ENCODE measurements at regions of chr19 and their contacts with region 1.

Region 1: DNA sequence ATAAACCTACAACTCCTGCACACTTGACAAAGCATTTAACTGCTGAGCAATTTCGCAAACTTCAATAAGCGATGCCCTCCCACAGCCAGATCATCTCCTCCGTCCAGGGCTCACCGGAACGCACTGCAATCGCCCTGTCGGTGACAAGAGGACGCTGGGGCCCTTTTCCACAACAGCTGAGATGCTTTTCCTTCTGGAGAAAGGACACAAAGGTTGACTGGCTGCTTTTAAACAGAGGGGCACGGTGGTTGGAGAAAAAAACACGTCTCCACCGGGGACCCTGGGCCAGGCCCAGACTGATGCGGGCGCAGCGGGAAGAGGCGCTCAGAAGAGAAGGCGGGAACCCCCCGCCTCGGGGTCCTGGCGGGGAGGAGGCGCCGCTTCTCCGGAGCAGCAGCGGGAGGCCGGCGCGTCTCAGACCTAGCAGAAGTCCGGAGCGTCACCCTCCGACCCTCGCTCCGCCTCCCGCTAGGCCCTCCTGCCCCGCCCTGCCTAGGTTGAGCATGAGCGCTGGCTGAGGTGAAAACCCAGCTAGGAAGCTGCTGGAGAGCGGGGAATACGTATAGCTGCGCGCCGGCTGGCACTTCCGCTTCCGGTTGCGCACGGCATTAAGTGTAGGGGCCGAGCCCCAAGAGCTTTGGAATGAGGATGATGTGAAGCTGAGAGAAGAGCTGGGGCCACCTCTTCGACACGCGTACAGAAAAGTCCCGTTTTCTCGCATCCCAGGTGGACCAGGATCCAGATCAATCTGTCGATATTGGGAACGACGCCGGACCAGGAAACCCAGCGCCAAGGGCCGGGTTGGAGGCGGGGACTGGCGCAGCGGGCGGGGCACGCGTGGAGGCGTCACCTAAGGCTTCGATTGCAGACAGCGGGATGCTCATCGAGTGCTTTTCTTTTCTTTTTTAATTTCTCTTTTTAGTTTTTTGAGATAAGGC is at the start of gene ZNF846:
- DNase-seq: peak; percentile 90
- H3K4me3 Mint-ChIP-seq: peak within 1 kb of the TSS; percentile 92
- H3K27ac Mint-ChIP-seq: peak within 1 kb of the TSS; percentile 98
- H3K4me1 Mint-ChIP-seq: peaks cover 4% of the 10 kb centered on the region
- H3K27me3 Mint-ChIP-seq: peaks cover 2% of the 10 kb centered on the region
- total RNA-seq, gene ZNF846: 2.3 and 2.4 TPM in 2 replicates

Region 2: DNA sequence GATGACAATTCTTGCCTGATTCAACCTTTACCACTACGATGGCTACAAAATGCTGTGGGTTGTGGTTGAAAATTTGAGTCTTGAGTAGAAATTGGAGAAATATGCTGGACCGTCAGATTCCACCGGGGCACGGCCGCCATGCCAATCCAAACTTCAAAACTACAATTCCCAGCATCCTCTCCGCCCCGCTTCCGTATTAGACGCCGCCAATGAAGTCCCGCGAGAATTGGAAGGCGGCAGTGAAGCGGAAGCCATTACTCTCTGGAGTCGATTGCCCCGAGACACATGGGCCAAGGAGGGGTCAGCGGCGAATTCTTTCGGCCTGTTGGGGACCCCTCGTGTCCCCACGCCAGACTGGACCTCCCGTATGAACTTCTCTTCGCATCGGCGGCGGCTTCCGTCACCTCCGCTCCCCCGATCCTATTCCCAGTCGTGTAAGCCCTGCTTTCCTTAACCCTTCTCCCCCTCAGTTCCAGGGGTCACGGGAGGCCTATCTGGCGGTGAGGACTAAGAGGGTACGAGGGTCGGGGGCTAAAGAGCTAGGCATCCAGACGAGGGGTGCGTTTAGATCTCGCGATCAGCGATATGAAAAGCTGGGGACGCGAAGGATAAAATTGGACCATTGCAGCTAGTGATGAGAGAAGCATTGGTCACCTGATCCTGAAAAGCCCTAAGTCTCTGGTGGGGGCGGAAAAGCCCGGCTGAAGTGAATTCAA is 628.1 kb before region 1 on chr19 and contains the start of gene ZNF317:
- intact Hi-C with region 1: loop called (anchors 1 kb)
- DNase-seq: peak; percentile 88
- H3K4me3 Mint-ChIP-seq: peak within 1 kb of the TSS; percentile 95
- H3K27ac Mint-ChIP-seq: peak within 1 kb of the TSS; percentile 94
- H3K4me1 Mint-ChIP-seq: peaks cover 33% of the 10 kb centered on the region
- H3K27me3 Mint-ChIP-seq: no peaks in the 10 kb centered on the region
- total RNA-seq, gene ZNF317: 50.7 and 53.3 TPM in 2 replicates

Region 3: GRCh38 chr19:9323919-9324583 is 444.4 kb before region 1 on chr19 and contains the start of gene ZNF559:
- intact Hi-C with region 1: loop called (anchors 1 kb)
- DNase-seq: peak; percentile 93
- H3K4me3 Mint-ChIP-seq: peak within 1 kb of the TSS; percentile 89
- H3K27ac Mint-ChIP-seq: peak within 1 kb of the TSS; percentile 92
- H3K4me1 Mint-ChIP-seq: peaks cover 25% of the 10 kb centered on the region
- H3K27me3 Mint-ChIP-seq: no peaks in the 10 kb centered on the region
- total RNA-seq, gene ZNF559: 5.0 and 6.4 TPM in 2 replicates

Region 4: DNA sequence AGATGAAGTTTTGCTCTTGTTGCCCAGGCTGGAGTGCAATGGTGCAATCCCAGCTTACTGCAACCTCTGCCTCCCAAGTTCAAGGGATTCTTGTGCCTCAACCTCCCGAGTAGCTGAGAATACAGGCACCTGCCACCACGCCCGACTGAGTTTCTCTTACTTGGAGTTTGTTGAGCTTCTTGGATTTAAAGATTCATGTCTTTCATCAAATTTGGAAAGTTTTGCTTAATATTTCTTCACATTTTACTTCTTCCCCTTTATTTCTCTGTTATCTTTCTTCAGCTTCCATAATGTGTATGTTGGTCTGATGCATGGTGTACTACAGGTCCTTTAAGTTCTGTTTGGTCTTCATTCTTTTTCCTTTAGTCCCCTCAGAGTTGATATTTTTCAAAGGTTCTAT is 261.2 kb before region 1 on chr19:
- intact Hi-C with region 1: no loop called
- DNase-seq: no peak
- H3K4me3 Mint-ChIP-seq: no peak overlapping the region
- H3K27ac Mint-ChIP-seq: no peak overlapping the region
- H3K4me1 Mint-ChIP-seq: no peaks in the 10 kb centered on the region
- H3K27me3 Mint-ChIP-seq: no peaks in the 10 kb centered on the region

Region 5: DNA sequence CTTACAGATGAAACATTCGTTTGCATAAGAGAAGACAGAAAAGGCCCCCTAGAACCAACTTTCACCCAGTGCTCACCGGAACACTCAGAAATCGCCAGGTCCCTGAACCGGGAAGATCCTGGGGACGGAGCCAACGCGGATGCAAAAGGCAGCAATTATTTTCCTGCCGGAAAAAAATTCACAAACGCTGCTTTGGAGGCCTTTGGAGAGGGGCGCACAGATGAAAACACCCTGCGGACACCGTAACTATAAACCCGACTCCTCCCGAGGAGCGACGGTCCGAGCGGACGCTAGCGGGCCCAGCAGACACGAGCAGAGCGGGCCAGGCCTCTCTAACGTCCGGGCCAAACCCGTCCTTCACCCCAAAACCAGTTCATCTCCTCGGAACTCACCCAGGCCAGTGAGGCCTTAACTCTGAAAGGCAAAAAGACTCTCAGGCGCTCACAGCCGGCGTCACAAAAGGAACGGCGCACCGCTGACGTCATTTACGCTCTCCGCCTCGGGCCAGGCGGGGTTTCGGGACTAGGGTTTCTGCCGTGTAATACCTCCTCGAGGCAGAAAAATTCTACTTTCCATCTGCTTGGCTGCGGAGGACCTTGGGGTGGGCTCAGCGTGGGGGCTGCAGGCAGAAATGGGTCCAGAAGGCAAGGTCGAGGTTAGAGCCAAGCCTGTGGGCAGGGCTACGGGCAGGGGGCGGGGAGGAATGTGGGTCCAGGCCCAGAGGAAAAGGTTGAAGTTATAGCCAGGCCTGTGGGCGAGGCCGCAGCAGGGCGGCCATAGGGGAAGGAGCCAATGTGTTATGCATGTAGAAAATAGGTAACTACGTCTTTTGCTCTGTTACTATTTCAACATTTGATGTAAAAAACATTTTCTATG is 230.0 kb before region 1 on chr19 and contains the start of gene ZNF426:
- intact Hi-C with region 1: loop called (anchors 1 kb)
- DNase-seq: peak; percentile 76
- H3K4me3 Mint-ChIP-seq: peak within 1 kb of the TSS; percentile 97
- H3K27ac Mint-ChIP-seq: peak within 1 kb of the TSS; percentile 98
- H3K4me1 Mint-ChIP-seq: peaks cover 5% of the 10 kb centered on the region
- H3K27me3 Mint-ChIP-seq: no peaks in the 10 kb centered on the region
- total RNA-seq, gene ZNF426: 10.2 and 10.3 TPM in 2 replicates

Region 6: DNA sequence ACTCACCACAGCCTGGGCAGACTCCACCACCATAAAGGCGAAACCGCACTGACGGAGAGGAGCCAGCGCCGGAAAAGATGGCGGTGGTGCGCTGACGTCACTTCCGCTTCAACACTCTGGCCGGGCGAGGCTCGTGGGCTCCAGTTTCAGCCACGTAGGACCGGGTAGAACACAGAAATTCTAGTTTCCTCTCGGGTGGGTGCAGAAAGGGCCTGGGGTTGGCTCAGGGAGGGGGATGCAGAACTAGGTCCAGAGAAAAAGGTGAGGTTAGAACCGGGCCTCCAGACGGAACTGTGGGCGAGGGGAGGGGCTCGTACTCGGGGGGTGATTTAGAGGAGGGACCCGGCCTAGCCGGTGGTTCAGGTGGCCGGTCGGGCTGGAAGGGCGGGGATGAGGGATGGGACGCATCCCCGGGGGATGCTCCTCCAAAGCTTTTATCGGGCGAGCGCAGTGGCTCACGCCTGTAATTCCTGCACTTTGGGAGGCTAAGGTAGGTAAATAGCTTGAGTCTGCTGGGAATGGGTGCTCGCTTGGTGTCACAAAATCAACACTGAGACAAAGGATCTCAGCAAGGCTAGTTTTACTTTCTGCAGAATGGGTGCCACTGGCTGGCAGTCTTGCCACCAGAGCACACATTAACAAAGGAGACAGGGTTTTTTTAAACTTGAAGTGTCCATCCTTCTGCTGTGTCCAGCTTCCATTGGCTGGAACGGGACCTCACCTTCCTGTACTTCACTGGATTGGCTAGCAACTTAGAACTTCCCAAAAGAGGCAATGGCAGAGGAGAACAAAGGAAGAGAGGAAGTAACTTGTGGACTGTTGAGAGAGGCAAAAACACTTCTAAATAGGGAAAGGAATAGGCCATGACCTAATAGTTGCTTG is 147.0 kb before region 1 on chr19 and contains the start of gene ZNF561:
- intact Hi-C with region 1: loop called (anchors 1 kb)
- DNase-seq: peak; percentile 80
- H3K4me3 Mint-ChIP-seq: peak within 1 kb of the TSS; percentile 100
- H3K27ac Mint-ChIP-seq: peak within 1 kb of the TSS; percentile 99
- H3K4me1 Mint-ChIP-seq: peaks cover 28% of the 10 kb centered on the region
- H3K27me3 Mint-ChIP-seq: no peaks in the 10 kb centered on the region
- total RNA-seq, gene ZNF561: 33.2 and 36.7 TPM in 2 replicates

Region 7: GRCh38 chr19:9727644-9728043 is 40.8 kb before region 1 on chr19:
- intact Hi-C with region 1: no loop called
- DNase-seq: no peak
- H3K4me3 Mint-ChIP-seq: no peak overlapping the region
- H3K27ac Mint-ChIP-seq: no peak overlapping the region
- H3K4me1 Mint-ChIP-seq: no peaks in the 10 kb centered on the region
- H3K27me3 Mint-ChIP-seq: no peaks in the 10 kb centered on the region

Region 8: DNA sequence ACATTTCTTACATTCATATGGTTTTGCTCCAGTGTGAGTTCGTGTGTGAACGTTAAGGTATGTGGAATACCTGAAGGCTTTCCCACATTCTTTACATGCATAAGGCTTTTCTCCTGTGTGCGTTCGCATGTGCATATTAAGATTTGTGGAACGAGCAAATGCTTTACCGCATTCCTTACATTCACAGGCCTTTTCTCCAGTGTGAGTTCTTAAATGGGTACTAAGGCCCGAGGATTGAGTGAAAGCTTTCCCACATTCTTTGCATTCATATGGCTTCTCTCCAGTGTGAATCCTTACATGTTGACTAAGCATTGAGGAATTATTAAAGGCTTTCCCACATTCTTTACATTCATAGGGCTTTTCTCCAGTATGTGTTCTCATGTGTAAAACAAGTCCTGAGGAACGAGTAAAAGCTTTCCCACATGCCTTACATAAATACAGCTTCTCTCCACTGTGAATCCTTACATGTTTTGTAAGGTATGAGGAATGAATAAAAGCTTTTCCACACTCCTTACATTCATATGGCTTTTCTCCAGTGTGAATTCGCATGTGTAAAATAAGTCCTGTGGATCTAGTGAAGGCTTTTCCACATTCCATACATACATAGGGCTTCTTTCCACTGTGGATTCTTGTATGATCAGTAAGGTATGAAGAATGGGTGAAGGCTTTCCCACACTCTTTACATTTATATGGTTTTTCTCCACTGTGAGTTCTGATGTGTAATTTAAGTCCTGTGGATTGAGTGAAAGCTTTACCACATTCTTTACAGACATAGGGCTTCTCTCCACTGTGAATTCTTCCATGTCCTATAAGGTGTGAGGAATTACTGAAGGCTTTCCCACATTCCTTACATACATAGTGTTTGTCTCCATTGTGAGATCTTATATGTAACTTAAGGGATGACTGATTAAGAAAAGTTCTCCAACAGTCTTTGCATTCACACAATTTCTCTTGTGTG is 10.6 kb before region 1 on chr19:
- intact Hi-C with region 1: no loop called
- DNase-seq: no peak
- H3K4me3 Mint-ChIP-seq: no peak overlapping the region
- H3K27ac Mint-ChIP-seq: no peak overlapping the region
- H3K4me1 Mint-ChIP-seq: no peaks in the 10 kb centered on the region
- H3K27me3 Mint-ChIP-seq: no peaks in the 10 kb centered on the region

Region 9: GRCh38 chr19:9785367-9786331 is 17.2 kb after region 1 on chr19:
- intact Hi-C with region 1: loop called (anchors 1 kb)
- DNase-seq: peak; percentile 90
- H3K4me3 Mint-ChIP-seq: peak overlapping the region; percentile 87
- H3K27ac Mint-ChIP-seq: peak overlapping the region; percentile 89
- H3K4me1 Mint-ChIP-seq: peaks cover 20% of the 10 kb centered on the region
- H3K27me3 Mint-ChIP-seq: no peaks in the 10 kb centered on the region

Region 10: GRCh38 chr19:9834726-9835506 is 66.5 kb after region 1 on chr19 and contains the start of gene PIN1:
- intact Hi-C with region 1: loop called (anchors 1 kb)
- DNase-seq: peak; percentile 99
- H3K4me3 Mint-ChIP-seq: peak within 1 kb of the TSS; percentile 97
- H3K27ac Mint-ChIP-seq: peak within 1 kb of the TSS; percentile 90
- H3K4me1 Mint-ChIP-seq: peaks cover 10% of the 10 kb centered on the region
- H3K27me3 Mint-ChIP-seq: no peaks in the 10 kb centered on the region
- total RNA-seq, gene PIN1: 86.4 and 87.3 TPM in 2 replicates

Measured in activated T-helper 1 cell treated with anti-CD3 and anti-CD28 coated beads, Interleukin-12 subunit alpha, Interleukin-12 subunit beta, Interleukin-2, Interleukin-4 antibody, amounts not matched to agents 30 ng/mL and 10 ng/mL and 1 ng/mL, durations not matched to agents 14 hours and 24 hours and 36 hours (primary cell).